AG04450 (cell line): ENCODE measurements at regions of chr15 and their contacts with region 1.

Region 1: DNA sequence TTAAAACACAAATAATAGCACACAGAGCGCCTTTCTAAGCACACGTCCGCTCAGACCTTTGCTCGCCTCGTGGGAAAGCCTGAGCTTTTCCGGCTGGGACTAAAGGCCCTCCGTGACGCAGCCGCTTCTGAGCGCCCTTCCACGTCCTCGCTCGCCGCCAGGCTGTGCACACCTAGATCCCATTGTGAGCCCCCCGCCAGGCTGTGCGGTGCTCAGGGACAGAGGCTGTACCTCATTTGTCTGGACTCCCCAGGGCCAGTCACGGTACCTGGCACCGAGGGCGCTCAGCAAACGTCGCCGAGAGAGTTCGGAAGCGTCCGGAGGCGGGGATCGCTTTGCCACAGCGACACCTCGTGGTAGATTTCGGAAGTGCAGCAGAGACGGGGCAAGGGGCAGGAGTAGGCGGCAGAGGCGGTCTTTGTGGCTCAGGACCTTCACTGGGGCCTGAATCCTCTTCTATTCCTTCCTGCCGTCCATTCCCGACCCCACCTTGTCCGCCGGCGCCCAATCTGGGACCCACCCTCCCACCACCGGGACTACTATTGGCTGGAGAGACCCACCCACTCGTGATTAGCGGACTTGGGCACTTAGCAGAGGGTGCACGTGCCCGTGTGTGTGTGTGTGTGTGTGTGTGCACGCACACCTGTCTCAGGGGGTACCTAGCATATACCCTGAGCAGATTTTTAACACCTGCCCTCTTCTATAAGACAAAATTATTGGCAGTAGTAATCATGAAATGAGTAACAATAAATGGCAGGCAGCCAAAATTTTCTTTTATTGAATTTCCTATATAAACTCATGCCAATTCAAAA is 65.6 kb downstream of the RHCG start:
- DNase-seq: peak; percentile 6
- H3K4me3 ChIP-seq: peak overlapping the region; percentile 58
- H3K27ac ChIP-seq: no peak overlapping the region
- H3K27me3 ChIP-seq: peaks cover 42% of the 10 kb centered on the region
- CTCF ChIP-seq: peak; percentile 96

Region 2: DNA sequence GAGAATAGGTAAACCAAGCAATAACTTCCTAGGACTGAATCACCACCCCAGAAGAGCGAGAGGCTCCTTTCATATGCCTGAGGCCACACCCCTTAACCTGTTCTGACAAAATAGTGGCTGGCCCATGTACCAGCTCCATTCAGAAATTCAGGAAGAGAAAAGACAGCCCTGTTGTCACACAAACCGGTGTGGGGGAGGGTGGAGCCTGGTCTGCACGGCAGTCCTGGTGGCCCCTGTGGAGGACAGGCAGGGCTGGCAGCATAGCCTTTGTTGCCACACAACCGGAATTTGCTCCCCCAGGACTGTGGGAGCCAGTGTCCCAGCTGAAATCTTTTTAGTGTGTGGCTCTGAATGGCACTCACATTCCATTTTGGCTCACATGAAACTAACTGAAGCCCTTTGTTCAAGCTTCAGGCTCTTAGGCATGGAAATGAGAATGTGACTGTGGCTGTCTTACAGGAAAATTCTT is 233.2 kb before region 1 on chr15:
- CTCF ChIA-PET with region 1: interaction called, 13 read pairs
- POLR2A ChIA-PET with region 1: no interaction called
- DNase-seq: no peak
- H3K4me3 ChIP-seq: no peak overlapping the region
- H3K27ac ChIP-seq: no peak overlapping the region
- H3K27me3 ChIP-seq: no peaks in the 10 kb centered on the region
- CTCF ChIP-seq: no peak

Region 3: GRCh38 chr15:89416141-89416853 is 14.4 kb before region 1 on chr15:
- CTCF ChIA-PET with region 1: interaction called, 16 read pairs
- POLR2A ChIA-PET with region 1: no interaction called
- DNase-seq: no peak
- H3K4me3 ChIP-seq: no peak overlapping the region
- H3K27ac ChIP-seq: no peak overlapping the region
- H3K27me3 ChIP-seq: peaks cover 71% of the 10 kb centered on the region
- CTCF ChIP-seq: peak; percentile 71

Region 4: GRCh38 chr15:89642106-89642505 is 211.4 kb after region 1 on chr15:
- CTCF ChIA-PET with region 1: no interaction called
- POLR2A ChIA-PET with region 1: no interaction called
- DNase-seq: no peak
- H3K4me3 ChIP-seq: no peak overlapping the region
- H3K27ac ChIP-seq: no peak overlapping the region
- H3K27me3 ChIP-seq: no peaks in the 10 kb centered on the region
- CTCF ChIP-seq: no peak